ENCODE measurements at regions of chr22 and their contacts with region 1.

Region 1: DNA sequence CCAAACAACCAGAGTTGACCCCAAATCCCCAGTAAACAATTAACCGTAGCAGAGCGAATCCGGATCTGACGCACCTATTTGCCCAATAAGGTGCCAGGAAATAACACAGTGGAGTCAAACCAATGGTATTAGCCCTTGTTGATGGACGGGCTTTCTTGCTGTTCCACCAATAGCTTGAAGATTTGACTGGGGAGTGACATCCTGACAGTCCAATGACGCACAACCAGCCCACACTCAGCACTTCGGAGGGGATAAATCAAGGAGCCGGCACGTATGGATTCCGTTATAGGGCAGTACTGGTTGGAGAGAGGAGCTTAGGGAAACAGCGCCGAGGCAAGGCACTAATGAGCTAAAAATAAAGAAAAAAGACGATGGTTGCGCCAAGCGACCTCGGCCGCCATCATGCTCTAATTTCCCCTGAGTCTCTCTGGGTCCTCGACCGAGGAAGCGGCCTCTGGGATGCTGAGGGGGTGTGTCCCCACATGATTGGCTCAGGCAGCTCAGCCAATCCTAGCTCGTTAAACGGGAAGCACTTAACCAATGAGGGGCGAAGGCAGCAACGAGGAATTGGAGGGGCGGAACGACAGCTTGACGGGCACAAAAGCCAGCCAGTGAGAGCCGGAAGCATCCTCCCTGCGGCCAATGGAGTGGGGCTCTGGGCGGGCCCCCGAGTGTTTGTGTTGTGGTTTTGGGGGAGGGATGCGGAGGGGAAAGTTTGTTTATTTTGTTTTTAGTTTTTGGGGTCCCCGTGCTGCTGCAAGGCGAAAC is 49.5 kb downstream of the FAM83F start:
- DNase-seq: peak; percentile 99 to 100 (median 99)
- H3K4me3 ChIP-seq: peak overlapping the region; percentile 60 to 67
- H3K4me3 Mint-ChIP-seq: peak overlapping the region; percentile 95 to 100 (median 98)
- H3K27ac ChIP-seq: peak overlapping the region; percentile 88
- H3K27ac Mint-ChIP-seq: peak overlapping the region; percentile 99 to 100 (median 100)
- H3K4me1 ChIP-seq: peaks cover 32% of the 10 kb centered on the region
- H3K4me1 Mint-ChIP-seq: peaks cover 22 to 47% (median 36%) of the 10 kb centered on the region in 4 donors
- H3K27me3 ChIP-seq: no peaks in the 10 kb centered on the region
- H3K27me3 Mint-ChIP-seq: peaks cover 4 to 10% of the 10 kb centered on the region in 2 donors

Region 2: DNA sequence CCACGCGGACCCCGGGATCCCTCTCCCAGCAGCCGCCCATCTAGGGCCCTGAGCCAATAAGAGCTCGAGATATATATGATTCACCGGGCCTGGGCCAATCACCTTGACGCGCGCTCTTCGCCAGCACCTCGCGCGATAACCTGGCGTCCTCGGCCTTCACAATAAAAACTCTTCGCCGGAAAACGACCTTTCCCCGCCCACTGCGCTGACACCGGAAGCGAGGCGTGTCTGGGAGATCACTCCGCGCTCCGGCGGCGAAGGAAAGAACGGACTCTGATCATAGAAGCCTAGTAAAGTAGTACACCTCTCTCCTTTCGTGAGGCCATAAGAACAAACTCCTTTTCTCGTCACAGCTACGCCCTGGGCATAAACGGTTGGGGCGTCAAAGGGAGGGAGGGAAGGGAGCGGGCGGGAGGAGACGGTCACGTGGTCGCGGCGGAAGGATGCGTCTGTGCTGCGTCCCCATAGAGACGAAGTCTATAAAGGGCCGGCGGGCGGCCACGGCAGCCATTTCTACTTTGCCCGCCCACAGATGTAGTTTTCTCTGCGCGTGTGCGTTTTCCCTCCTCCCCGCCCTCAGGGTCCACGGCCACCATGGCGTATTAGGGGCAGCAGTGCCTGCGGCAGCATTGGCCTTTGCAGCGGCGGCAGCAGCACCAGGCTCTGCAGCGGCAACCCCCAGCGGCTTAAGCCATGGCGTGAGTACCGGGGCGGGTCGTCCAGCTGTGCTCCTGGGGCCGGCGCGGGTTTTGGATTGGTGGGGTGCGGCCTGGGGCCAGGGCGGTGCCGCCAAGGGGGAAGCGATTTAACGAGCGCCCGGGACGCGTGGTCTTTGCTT is 524.0 kb before region 1 on chr22 and contains the start of gene ATF4:
- CTCF ChIA-PET with region 1: interaction called, 3 read pairs
- POLR2A ChIA-PET with region 1: interaction called, 40 read pairs
- intact Hi-C with region 1: no loop called
- DNase-seq: peak; percentile 96 to 98 (median 97)
- H3K4me3 ChIP-seq: peak within 1 kb of the TSS; percentile 85 to 96
- H3K4me3 Mint-ChIP-seq: peak within 1 kb of the TSS; percentile 92 to 99 (median 97)
- H3K27ac ChIP-seq: peak within 1 kb of the TSS; percentile 85
- H3K27ac Mint-ChIP-seq: peak within 1 kb of the TSS; percentile 96 to 100 (median 99)
- H3K4me1 ChIP-seq: peaks cover 46% of the 10 kb centered on the region
- H3K4me1 Mint-ChIP-seq: peaks cover 28 to 60% (median 47%) of the 10 kb centered on the region in 4 donors
- H3K27me3 ChIP-seq: no peaks in the 10 kb centered on the region
- H3K27me3 Mint-ChIP-seq: peaks cover 3 to 4% of the 10 kb centered on the region in 2 donors
- total RNA-seq, gene ATF4: 265 to 278 TPM

Region 3: DNA sequence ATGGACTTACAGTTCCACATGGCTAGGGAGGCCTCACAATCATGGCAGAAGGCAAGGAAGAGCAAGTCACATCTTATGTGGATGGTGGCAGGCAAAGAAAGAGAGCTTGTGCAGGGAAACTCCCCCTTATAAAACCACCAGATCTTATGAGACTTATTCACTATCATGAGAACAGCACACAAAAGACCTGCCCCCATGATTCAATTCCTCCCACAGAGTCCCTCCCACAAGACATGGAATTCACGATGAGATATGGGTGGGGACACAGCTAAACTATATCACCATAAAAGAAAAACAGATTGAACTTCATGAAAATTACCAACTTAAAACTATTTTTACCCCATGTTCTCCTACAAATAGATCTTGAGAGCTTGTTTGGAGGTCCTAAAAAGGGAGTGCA is 170.3 kb before region 1 on chr22:
- CTCF ChIA-PET with region 1: no interaction called
- POLR2A ChIA-PET with region 1: no interaction called
- intact Hi-C with region 1: no loop called
- DNase-seq: no peak
- H3K4me3 ChIP-seq: no peak overlapping the region
- H3K4me3 Mint-ChIP-seq: no peak overlapping the region
- H3K27ac ChIP-seq: no peak overlapping the region
- H3K27ac Mint-ChIP-seq: no peak overlapping the region
- H3K4me1 ChIP-seq: no peaks in the 10 kb centered on the region
- H3K4me1 Mint-ChIP-seq: peaks cover 0 to 6% (median under 1%) of the 10 kb centered on the region in 4 donors
- H3K27me3 ChIP-seq: no peaks in the 10 kb centered on the region
- H3K27me3 Mint-ChIP-seq: no peaks in the 10 kb centered on the region

Region 4: GRCh38 chr22:40067639-40068038 is 23.4 kb after region 1 on chr22:
- CTCF ChIA-PET with region 1: no interaction called
- POLR2A ChIA-PET with region 1: interaction called, 10 read pairs
- intact Hi-C with region 1: no loop called
- DNase-seq: no peak
- H3K4me3 ChIP-seq: no peak overlapping the region
- H3K4me3 Mint-ChIP-seq: peak overlapping the region in 5 of 8 donors; percentile 1 to 65 (median 40)
- H3K27ac ChIP-seq: no peak overlapping the region
- H3K27ac Mint-ChIP-seq: no peak overlapping the region
- H3K4me1 ChIP-seq: peaks cover 80% of the 10 kb centered on the region
- H3K4me1 Mint-ChIP-seq: peaks cover 48 to 90% (median 65%) of the 10 kb centered on the region in 4 donors
- H3K27me3 ChIP-seq: no peaks in the 10 kb centered on the region
- H3K27me3 Mint-ChIP-seq: no peaks in the 10 kb centered on the region

Region 5: DNA sequence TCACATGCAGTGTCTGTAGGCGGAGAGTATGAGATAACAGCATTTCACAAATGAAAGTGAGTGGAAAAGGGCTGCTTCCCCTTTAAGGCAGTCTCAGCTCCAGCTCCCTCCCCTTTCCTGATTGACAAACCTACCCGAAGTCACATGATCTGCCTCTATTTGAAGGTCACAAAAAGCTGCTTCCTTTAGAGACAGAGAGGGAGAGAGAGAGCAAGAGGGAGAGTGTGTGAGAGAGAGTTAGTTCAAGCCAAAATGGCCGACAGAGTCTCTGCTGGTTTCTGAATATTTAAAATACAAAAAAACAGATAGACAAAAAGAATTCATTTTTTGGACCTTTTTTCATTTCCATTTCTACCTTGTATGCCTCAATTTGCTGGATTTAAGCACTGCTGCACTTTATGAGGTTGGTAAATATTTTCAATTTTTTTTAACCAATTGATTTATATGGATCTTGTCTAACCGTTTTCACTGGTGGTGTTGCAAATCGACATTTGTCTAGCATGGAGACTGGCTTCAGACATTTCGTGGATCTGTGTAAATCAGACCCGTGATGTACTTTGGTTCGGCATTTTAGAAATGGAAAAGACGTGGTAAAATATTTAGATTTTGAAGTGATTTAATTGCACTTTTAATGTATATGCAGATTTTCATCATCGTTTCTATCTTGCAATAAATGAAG is 133.6 kb after region 1 on chr22 and contains the start of gene TNRC6B:
- CTCF ChIA-PET with region 1: interaction called, 4 read pairs
- POLR2A ChIA-PET with region 1: interaction called, 63 read pairs
- intact Hi-C with region 1: loop called (anchors 1 kb)
- DNase-seq: peak; percentile 88 to 94 (median 90)
- H3K4me3 ChIP-seq: peak within 1 kb of the TSS; percentile 56 to 84
- H3K4me3 Mint-ChIP-seq: peak within 1 kb of the TSS; percentile 79 to 97 (median 92)
- H3K27ac ChIP-seq: peak within 1 kb of the TSS; percentile 60
- H3K27ac Mint-ChIP-seq: peak within 1 kb of the TSS; percentile 84 to 98 (median 92)
- H3K4me1 ChIP-seq: peaks cover 67% of the 10 kb centered on the region
- H3K4me1 Mint-ChIP-seq: peaks cover 46 to 74% (median 58%) of the 10 kb centered on the region in 4 donors
- H3K27me3 ChIP-seq: no peaks in the 10 kb centered on the region
- H3K27me3 Mint-ChIP-seq: no peaks in the 10 kb centered on the region
- total RNA-seq, gene TNRC6B: 137 to 155 TPM

Region 6: GRCh38 chr22:40289991-40290459 is 245.7 kb after region 1 on chr22:
- CTCF ChIA-PET with region 1: no interaction called
- POLR2A ChIA-PET with region 1: interaction called, 15 read pairs
- intact Hi-C with region 1: no loop called
- DNase-seq: peak; percentile 69 to 89 (median 75)
- H3K4me3 ChIP-seq: no peak overlapping the region
- H3K4me3 Mint-ChIP-seq: peak overlapping the region; percentile 13 to 86 (median 78)
- H3K27ac ChIP-seq: peak overlapping the region; percentile 91
- H3K27ac Mint-ChIP-seq: peak overlapping the region; percentile 95 to 99 (median 97)
- H3K4me1 ChIP-seq: peaks cover 66% of the 10 kb centered on the region
- H3K4me1 Mint-ChIP-seq: peaks cover 43 to 73% (median 58%) of the 10 kb centered on the region in 4 donors
- H3K27me3 ChIP-seq: no peaks in the 10 kb centered on the region
- H3K27me3 Mint-ChIP-seq: no peaks in the 10 kb centered on the region

Region 7: DNA sequence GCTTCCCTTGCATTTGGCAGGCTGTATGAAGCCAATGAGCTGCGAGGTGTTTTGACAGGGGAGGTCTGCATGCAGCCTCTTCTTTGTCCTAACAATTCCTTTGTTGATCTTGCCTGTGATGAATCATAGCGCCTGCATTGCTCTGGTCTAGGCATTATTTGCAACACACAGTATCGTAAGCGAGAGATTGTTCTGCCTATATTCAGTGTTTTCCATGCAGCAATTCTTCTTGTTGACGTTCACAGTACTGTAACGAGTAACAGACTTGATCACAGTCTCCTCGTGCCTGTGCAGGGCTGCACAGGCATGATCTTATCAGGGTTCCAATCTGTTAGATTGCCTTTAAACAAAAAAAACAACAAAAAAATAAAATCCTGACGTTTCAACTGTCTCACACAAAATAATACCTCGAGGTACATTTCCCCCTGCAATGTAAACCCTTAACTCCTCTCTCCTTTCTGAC is 288.1 kb after region 1 on chr22:
- CTCF ChIA-PET with region 1: no interaction called
- POLR2A ChIA-PET with region 1: interaction called, 20 read pairs
- intact Hi-C with region 1: no loop called
- DNase-seq: peak in 4 of 5 donors; percentile 29 to 56 (median 39)
- H3K4me3 ChIP-seq: peak overlapping the region; percentile 17 to 18
- H3K4me3 Mint-ChIP-seq: peak overlapping the region; percentile 11 to 80 (median 71)
- H3K27ac ChIP-seq: peak overlapping the region; percentile 32
- H3K27ac Mint-ChIP-seq: peak overlapping the region; percentile 77 to 95 (median 90)
- H3K4me1 ChIP-seq: peaks cover 98% of the 10 kb centered on the region
- H3K4me1 Mint-ChIP-seq: peaks cover 71 to 99% (median 87%) of the 10 kb centered on the region in 4 donors
- H3K27me3 ChIP-seq: no peaks in the 10 kb centered on the region
- H3K27me3 Mint-ChIP-seq: no peaks in the 10 kb centered on the region

Region 8: GRCh38 chr22:40636380-40637182 is 592.3 kb after region 1 on chr22 and contains the start of gene MRTFA:
- CTCF ChIA-PET with region 1: no interaction called
- POLR2A ChIA-PET with region 1: no interaction called
- intact Hi-C with region 1: loop called (anchors 1 kb)
- DNase-seq: peak; percentile 98 to 100 (median 99)
- H3K4me3 ChIP-seq: peak within 1 kb of the TSS; percentile 95 to 98
- H3K4me3 Mint-ChIP-seq: peak within 1 kb of the TSS; percentile 96 to 99 (median 98)
- H3K27ac ChIP-seq: peak within 1 kb of the TSS; percentile 85
- H3K27ac Mint-ChIP-seq: peak within 1 kb of the TSS; percentile 92 to 99 (median 98)
- H3K4me1 ChIP-seq: peaks cover 34% of the 10 kb centered on the region
- H3K4me1 Mint-ChIP-seq: peaks cover 23 to 54% (median 32%) of the 10 kb centered on the region in 4 donors
- H3K27me3 ChIP-seq: no peaks in the 10 kb centered on the region
- H3K27me3 Mint-ChIP-seq: no peaks in the 10 kb centered on the region
- total RNA-seq, gene MRTFA: 79.1 to 91.6 TPM